Ascending aorta (tissue), 2 donors: ENCODE measurements at regions of chr5 and their contacts with region 1.

Region 1: DNA sequence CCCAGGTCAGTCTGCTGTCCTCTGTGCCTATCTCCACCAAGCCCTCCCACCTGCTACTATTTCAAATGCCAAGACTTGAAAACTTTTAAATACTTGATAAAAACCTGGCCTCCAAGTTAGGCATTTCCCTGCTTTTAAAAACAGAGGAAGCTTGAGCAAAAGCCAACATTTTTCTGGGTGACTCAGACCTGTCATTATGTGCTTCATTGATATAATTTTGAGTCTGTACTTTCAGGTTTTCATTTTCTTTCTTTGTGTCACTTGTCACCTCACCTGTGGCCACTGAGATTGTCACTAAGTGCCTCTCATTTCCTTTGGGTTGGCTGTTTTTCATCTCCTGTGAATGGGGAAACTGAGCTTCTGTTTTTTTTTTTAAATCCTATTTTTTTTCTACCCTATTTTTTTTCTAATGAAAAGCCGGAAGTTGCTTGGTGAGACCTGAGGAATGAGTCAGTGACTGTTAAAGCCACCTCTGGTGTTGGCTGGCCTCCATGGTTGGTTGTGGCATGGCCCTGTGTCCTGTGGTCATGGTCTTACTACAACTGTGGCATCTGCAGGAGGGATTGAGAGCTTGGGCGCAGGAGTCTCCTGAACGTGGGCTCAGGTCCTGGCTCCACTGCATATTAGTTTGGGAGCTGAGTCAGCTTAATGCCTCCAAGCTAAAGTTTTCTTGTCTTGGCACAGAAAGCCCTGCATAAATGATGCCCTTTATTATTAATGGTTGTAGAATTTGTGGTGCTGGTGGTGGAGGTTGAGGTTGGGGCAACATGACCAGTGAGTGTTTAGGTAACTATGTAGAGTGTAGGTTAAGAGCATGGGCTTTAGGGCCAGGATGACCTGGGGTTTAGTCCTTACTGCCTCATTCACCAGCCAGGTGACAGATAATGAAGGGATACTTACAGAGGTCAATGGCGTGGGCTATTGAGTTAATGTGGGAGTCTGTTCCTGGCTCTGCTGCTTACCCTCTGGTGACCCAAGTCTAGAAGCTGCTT is 56.9 kb downstream of the ARHGAP26 start:
- DNase-seq: peak in 1 of 2 donors; percentile 79
- H3K4me3 ChIP-seq: no peak overlapping the region
- H3K27ac ChIP-seq: peak overlapping the region; percentile 29 to 62
- H3K4me1 ChIP-seq: peaks cover 21 to 49% of the 10 kb centered on the region in 2 donors
- H3K27me3 ChIP-seq: no peaks in the 10 kb centered on the region
- CTCF ChIP-seq: no peak

Region 2: DNA sequence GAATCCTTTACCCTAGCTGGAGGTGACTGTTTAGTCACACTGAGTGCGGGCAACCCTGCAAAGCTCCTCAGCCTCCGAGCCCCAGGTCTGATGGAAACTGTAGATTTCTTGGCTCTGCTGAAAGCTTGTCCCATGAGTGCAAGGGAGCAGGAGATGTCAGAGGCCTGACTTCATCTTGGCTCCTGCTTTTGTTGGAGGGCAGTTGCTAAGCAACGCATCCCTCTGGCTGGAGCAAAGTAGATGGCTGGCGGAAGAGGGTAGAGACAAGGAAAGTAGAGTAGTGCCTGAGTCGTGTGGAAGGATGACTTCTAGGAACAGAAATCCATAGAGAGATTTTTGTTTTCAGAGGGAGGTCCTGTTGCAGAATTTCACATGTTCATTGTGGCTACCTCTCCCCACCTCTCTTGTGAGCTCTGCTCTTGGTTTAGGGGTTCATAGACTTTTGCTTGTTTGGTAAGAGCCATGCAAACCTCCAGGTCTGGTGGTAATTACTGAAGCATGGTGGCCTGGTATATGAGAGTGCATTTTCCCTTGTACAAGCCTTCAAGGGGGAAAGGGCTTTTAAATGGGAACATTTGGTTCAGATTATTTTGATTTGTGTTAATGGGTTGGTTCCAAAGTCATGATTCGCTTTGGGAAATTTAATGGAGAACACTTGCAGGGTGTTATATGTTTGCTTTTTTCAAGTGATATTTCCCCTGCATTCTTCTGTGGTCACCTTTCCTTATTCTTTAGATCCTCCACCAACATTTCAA is 14.7 kb after region 1 on chr5:
- intact Hi-C with region 1: loop called (anchors 1 kb)
- DNase-seq: peak; percentile 70 to 94
- H3K4me3 ChIP-seq: no peak overlapping the region
- H3K27ac ChIP-seq: peak overlapping the region; percentile 69 to 81
- H3K4me1 ChIP-seq: peaks cover 39 to 66% of the 10 kb centered on the region in 2 donors
- H3K27me3 ChIP-seq: no peaks in the 10 kb centered on the region
- CTCF ChIP-seq: no peak

Region 3: GRCh38 chr5:142874537-142874936 is 47.5 kb after region 1 on chr5:
- intact Hi-C with region 1: loop called (anchors 5 kb)
- DNase-seq: peak; percentile 55 to 96
- H3K4me3 ChIP-seq: no peak overlapping the region
- H3K27ac ChIP-seq: peak overlapping the region; percentile 42 to 56
- H3K4me1 ChIP-seq: peaks cover 13 to 27% of the 10 kb centered on the region in 2 donors
- H3K27me3 ChIP-seq: no peaks in the 10 kb centered on the region
- CTCF ChIP-seq: no peak

Region 4: GRCh38 chr5:142888469-142889085 is 61.5 kb after region 1 on chr5:
- intact Hi-C with region 1: no loop called
- DNase-seq: no peak
- H3K4me3 ChIP-seq: no peak overlapping the region
- H3K27ac ChIP-seq: no peak overlapping the region
- H3K4me1 ChIP-seq: peaks cover 0 to 3% of the 10 kb centered on the region in 2 donors
- H3K27me3 ChIP-seq: no peaks in the 10 kb centered on the region
- CTCF ChIP-seq: peak; percentile 70 to 79 (median 75)